K562 (cell line): ENCODE measurements at regions of chr17 and their contacts with region 1.

Region 1: GRCh38 chr17:29722411-29723198 is 99.9 kb upstream of the CORO6 start:
- DNase-seq: peak; percentile 24 to 68 (median 40)
- ATAC-seq: peak; percentile 69
- H3K4me3 ChIP-seq: no peak overlapping the region
- H3K27ac ChIP-seq: peak overlapping the region; percentile 66
- H3K4me1 ChIP-seq: peaks cover 23 to 56% of the 10 kb centered on the region in 2 experiments
- H3K27me3 ChIP-seq: no peaks in the 10 kb centered on the region
- CTCF ChIP-seq: no peak
- EP300 ChIP-seq: peak; percentile 20; the same call in 1 of the 2 replicates
- POLR2A ChIP-seq: no peak
- RAD21 ChIP-seq: 0 out of 4 replicates have a peak, but pooled peaks of 1 of the 2 experiments have one; percentile 21

Region 2: GRCh38 chr17:29640413-29640812 is 82.2 kb before region 1 on chr17:
- CTCF ChIA-PET with region 1: no interaction called
- POLR2A ChIA-PET with region 1: no interaction called
- in situ Hi-C with region 1: no loop called
- intact Hi-C with region 1: loop called (anchors 5 kb)
- DNase-seq: no peak
- ATAC-seq: no peak
- H3K4me3 ChIP-seq: no peak overlapping the region
- H3K27ac ChIP-seq: no peak overlapping the region
- H3K4me1 ChIP-seq: peaks cover 12 to 22% of the 10 kb centered on the region in 2 experiments
- H3K27me3 ChIP-seq: no peaks in the 10 kb centered on the region
- CTCF ChIP-seq: no peak
- EP300 ChIP-seq: no peak
- POLR2A ChIP-seq: no peak
- RAD21 ChIP-seq: no peak

Region 3: GRCh38 chr17:29682054-29682453 is 40.6 kb before region 1 on chr17:
- CTCF ChIA-PET with region 1: no interaction called
- POLR2A ChIA-PET with region 1: interaction called, 3 read pairs
- in situ Hi-C with region 1: no loop called
- intact Hi-C with region 1: loop called (anchors 5 kb)
- DNase-seq: peak in 2 of 4 experiments; percentile 27 to 47
- ATAC-seq: peak; percentile 79
- H3K4me3 ChIP-seq: no peak overlapping the region
- H3K27ac ChIP-seq: peak overlapping the region; percentile 47; the same call in 2 of the 3 replicates
- H3K4me1 ChIP-seq: peaks cover 9 to 15% of the 10 kb centered on the region in 2 experiments; a peak in 4 of 5 replicates
- H3K27me3 ChIP-seq: no peaks in the 10 kb centered on the region
- CTCF ChIP-seq: peak in 1 of 3 experiments; percentile 43; a peak in 2 of 6 replicates
- EP300 ChIP-seq: no peak
- POLR2A ChIP-seq: no peak
- RAD21 ChIP-seq: peak in 1 of 2 experiments; percentile 40; a peak in 2 of 4 replicates

Region 4: DNA sequence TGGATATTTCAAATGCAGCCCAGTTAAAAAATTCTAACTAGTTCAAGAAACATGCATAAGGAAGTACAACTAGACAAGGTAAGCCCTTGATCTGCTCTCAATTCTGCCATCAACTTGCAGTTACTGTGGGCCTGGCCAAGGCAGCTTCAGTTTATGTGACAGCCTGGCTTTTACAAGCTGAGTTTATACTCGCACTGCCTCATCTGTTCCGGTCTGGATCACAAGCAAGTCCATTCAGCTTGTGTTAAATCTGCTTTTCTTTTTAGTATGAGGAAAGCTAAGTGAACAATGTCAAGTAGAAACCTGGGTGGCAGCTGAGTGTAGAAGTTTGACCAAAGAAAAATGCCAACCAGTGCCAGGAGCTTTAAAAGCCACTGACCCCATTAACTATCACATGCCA is 23.3 kb before region 1 on chr17:
- CTCF ChIA-PET with region 1: no interaction called
- POLR2A ChIA-PET with region 1: interaction called, 10 read pairs
- in situ Hi-C with region 1: no loop called
- intact Hi-C with region 1: no loop called
- DNase-seq: no peak
- ATAC-seq: 0 out of 3 replicates have a peak, but pooled peaks have one; percentile 37
- H3K4me3 ChIP-seq: no peak overlapping the region
- H3K27ac ChIP-seq: no peak overlapping the region; the same call in 2 of the 3 replicates
- H3K4me1 ChIP-seq: peaks cover 5 to 27% of the 10 kb centered on the region in 2 experiments
- H3K27me3 ChIP-seq: no peaks in the 10 kb centered on the region
- CTCF ChIP-seq: no peak
- EP300 ChIP-seq: no peak
- POLR2A ChIP-seq: no peak
- RAD21 ChIP-seq: no peak

Region 5: GRCh38 chr17:29710891-29711418 is 11.7 kb before region 1 on chr17:
- CTCF ChIA-PET with region 1: no interaction called
- POLR2A ChIA-PET with region 1: interaction called, 23 read pairs
- in situ Hi-C with region 1: no loop called
- intact Hi-C with region 1: no loop called
- DNase-seq: peak; percentile 63 to 84 (median 74)
- ATAC-seq: peak; percentile 85
- H3K4me3 ChIP-seq: no peak overlapping the region
- H3K27ac ChIP-seq: peak overlapping the region; percentile 15; the same call in 1 of the 3 replicates
- H3K4me1 ChIP-seq: peaks cover 9 to 48% of the 10 kb centered on the region in 2 experiments
- H3K27me3 ChIP-seq: no peaks in the 10 kb centered on the region
- CTCF ChIP-seq: no peak
- EP300 ChIP-seq: peak; percentile 82
- POLR2A ChIP-seq: no peak
- RAD21 ChIP-seq: peak in 1 of 2 experiments; percentile 30; a peak in 2 of 4 replicates

Region 6: DNA sequence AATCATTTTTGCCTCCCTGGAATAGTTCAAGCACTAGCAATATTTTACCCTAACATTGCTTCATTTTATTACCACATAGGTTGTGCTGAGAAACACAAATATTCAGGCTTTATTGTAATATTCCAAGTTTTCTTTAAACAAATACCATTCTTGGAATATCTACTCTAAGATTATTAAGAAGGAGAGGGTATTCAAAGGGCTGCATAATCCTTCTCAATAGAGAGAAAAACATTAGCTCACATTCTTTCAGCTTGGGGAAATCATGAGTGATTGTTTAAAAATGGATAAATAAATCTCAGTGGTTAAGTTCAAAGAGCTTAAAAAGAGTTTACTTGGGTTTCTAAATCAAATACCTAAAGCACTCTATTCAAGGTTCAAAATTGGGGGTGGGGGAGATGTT is 12.0 kb after region 1 on chr17:
- CTCF ChIA-PET with region 1: no interaction called
- POLR2A ChIA-PET with region 1: interaction called, 12 read pairs
- in situ Hi-C with region 1: no loop called
- intact Hi-C with region 1: no loop called
- DNase-seq: no peak
- ATAC-seq: no peak
- H3K4me3 ChIP-seq: no peak overlapping the region
- H3K27ac ChIP-seq: no peak overlapping the region
- H3K4me1 ChIP-seq: peaks cover 6 to 22% of the 10 kb centered on the region in 2 experiments; a peak in 4 of 5 replicates
- H3K27me3 ChIP-seq: no peaks in the 10 kb centered on the region
- CTCF ChIP-seq: no peak
- EP300 ChIP-seq: no peak
- POLR2A ChIP-seq: no peak
- RAD21 ChIP-seq: no peak

Region 7: DNA sequence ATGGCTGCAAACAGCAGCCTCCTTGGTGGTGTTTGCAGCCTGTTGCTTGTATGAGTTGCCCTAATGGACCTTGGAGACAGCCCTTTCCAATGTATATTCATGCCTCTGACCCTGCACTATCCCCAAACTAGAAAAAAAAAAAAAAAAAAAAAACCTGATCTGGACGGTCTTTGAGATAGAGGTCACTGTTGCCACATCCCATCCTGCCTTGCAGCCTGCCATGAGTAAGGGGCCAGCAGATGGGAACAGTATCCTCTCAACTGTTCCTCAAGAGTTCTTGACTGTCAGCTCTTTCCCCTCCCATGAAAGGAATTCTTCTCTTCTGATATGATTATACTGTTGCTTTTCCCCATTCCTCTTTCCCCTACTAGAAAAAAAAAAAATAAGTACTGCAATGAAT is 55.1 kb after region 1 on chr17:
- CTCF ChIA-PET with region 1: no interaction called
- POLR2A ChIA-PET with region 1: interaction called, 3 read pairs
- in situ Hi-C with region 1: no loop called
- intact Hi-C with region 1: loop called (anchors 5 kb)
- DNase-seq: no peak
- ATAC-seq: no peak
- H3K4me3 ChIP-seq: no peak overlapping the region
- H3K27ac ChIP-seq: no peak overlapping the region
- H3K4me1 ChIP-seq: no peaks in the 10 kb centered on the region; a peak in 3 of 5 replicates
- H3K27me3 ChIP-seq: no peaks in the 10 kb centered on the region
- CTCF ChIP-seq: no peak
- EP300 ChIP-seq: no peak
- POLR2A ChIP-seq: no peak
- RAD21 ChIP-seq: no peak